ENCODE measurements at regions of chr19 and their contacts with region 1.

Region 1: DNA sequence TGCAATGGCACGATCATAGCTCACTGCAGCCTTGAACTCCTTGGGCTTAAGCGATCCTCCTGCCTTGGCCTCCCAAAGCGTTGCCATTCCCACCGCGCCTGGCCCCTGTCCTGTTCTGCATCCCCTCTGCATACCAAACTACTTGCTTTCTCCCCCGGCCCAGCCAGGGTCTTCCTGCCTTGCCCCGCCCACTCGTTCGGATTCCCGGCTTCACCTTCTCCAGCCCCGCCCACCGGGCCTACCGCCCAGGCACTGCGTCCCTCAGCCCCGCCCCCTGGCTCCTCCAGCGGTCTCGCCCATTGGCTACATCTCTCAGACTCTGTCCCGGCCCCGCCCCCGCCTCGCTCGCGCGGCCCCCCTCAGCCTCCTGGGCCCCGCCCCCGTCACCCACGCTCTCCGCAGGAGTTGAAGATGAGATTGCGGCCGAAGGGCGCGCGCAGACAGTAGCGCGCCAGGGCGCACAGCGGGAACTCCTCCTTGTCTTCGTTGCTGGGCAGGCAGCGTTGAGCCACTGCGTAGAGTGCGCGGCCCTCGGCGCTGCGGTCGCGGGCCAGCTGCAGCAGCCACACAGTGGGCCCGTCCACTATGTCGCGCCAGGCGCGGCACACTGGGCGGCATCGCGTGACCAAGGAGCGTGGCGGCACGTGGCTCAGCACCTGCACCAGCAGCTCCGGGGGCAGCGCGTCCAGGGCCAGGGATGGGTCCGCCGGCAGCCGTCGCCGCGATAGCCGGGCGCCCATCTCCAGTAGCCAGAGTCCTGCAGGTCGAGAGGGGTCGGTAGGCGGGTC is 19.0 kb downstream of the MRPS12 start:
- DNase-seq: peak; percentile 42 to 88 (median 80)
- ATAC-seq: peak; percentile 98
- H3K4me3 ChIP-seq: peak overlapping the region in 1 of 2 experiments; percentile 41
- H3K4me3 Mint-ChIP-seq: peak overlapping the region; percentile 64
- H3K27ac ChIP-seq: no peak overlapping the region
- H3K27ac Mint-ChIP-seq: peak overlapping the region; percentile 74
- H3K4me1 ChIP-seq: peaks cover 8% of the 10 kb centered on the region
- H3K4me1 Mint-ChIP-seq: peaks cover 14% of the 10 kb centered on the region
- H3K27me3 ChIP-seq: peaks cover 0 to 2% of the 10 kb centered on the region in 2 experiments
- H3K27me3 Mint-ChIP-seq: peaks cover 25% of the 10 kb centered on the region
- CTCF ChIP-seq: no peak

Region 2: DNA sequence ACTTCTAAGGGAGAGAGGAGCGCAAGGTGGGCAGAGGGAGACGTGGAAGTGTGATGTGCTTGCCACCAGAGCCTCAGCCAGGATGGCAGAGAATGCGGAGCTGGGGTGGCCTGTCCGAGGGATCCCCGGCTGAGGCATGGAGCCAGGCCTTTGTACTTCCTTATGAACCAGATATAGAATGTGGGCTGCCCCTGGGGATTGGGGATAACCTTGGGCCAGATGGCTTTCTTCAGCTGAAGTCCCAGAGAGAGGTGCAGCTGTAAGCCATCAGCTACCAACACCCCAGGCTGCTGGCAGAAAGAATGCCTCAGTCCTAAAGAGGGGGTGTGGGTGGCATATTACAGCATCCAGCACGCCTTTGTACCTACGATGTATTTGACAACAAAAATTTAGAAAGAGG is 51.3 kb after region 1 on chr19:
- CTCF ChIA-PET with region 1: no interaction called
- POLR2A ChIA-PET with region 1: no interaction called
- intact Hi-C with region 1: no loop called
- DNase-seq: no peak
- ATAC-seq: no peak
- H3K4me3 ChIP-seq: no peak overlapping the region
- H3K4me3 Mint-ChIP-seq: no peak overlapping the region
- H3K27ac ChIP-seq: no peak overlapping the region
- H3K27ac Mint-ChIP-seq: no peak overlapping the region
- H3K4me1 ChIP-seq: no peaks in the 10 kb centered on the region
- H3K4me1 Mint-ChIP-seq: no peaks in the 10 kb centered on the region
- H3K27me3 ChIP-seq: no peaks in the 10 kb centered on the region
- H3K27me3 Mint-ChIP-seq: peaks cover 18% of the 10 kb centered on the region
- CTCF ChIP-seq: no peak

Region 3: DNA sequence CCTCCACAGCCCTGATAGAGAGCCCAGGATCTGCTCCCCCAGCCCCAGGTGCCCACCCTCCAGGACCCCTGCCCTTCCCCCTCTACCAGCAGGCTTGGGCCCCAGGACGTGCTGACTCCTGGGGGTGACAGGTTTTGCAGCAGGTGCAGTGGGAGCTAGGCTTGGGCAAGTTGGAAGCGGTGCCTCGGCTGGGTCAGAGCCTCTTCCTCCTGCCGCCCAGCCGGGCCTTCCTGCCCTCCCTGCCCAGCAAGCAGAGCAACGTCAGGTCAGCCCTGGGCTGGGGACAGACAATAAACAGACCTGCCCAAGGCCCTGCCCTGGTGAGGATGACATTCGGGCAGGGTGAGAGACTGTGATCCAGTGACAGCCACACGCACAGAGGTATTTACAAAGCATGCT is 237.8 kb after region 1 on chr19:
- CTCF ChIA-PET with region 1: interaction called, 10 read pairs
- POLR2A ChIA-PET with region 1: no interaction called
- intact Hi-C with region 1: no loop called
- DNase-seq: no peak
- ATAC-seq: no peak
- H3K4me3 ChIP-seq: no peak overlapping the region
- H3K4me3 Mint-ChIP-seq: no peak overlapping the region
- H3K27ac ChIP-seq: no peak overlapping the region
- H3K27ac Mint-ChIP-seq: no peak overlapping the region
- H3K4me1 ChIP-seq: no peaks in the 10 kb centered on the region
- H3K4me1 Mint-ChIP-seq: no peaks in the 10 kb centered on the region
- H3K27me3 ChIP-seq: peaks cover 0 to 6% of the 10 kb centered on the region in 2 experiments
- H3K27me3 Mint-ChIP-seq: peaks cover 20% of the 10 kb centered on the region
- CTCF ChIP-seq: no peak

Region 4: DNA sequence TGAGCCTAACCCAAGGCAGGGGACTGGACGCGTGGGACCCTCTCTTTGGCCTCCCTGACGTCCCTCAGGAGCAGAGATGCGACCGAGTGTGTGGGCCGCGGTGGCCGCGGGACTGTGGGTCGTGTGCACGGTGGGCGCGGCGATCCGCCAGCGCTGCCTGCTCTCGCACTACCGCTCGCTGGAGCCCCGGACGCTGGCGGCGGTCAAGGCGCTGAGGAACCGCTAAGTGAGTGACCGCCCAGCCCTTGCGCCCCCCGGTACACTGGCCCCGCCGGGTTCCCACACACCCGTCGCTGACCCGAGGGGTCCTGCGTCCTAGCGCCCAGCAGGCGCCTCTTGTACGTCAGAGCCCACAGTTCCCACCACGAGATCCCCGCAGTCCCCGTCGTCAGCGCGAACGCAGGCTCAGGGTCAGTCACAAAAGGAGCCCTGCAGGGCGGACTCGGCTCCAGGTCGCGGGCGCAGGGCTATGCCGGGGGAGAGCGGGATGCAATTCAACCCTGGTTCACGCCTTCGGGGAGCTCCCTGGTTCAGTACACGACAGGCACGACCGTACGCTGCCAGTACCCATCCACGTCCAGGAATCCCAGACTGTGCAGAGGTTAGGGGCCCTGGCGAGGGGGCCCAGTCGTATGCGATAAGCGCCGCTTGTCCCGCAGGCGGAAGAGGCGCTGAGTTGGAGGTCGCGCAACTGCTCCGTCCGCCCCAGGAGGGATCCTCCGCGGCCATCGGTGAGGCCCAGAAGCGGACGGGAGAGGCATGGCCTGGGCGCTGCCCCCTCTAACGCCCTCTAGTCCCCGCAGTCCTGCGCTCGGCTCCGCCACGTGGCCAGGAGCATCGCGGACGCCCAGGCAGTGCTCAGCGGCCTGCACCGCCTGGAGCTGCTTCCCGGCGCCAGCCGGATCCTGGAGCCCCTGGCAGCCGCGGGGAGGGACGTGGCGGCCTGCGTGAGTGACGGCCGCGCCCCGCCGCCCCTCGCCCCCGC is 314.8 kb after region 1 on chr19:
- CTCF ChIA-PET with region 1: no interaction called
- POLR2A ChIA-PET with region 1: no interaction called
- intact Hi-C with region 1: no loop called
- DNase-seq: no peak
- ATAC-seq: no peak
- H3K4me3 ChIP-seq: no peak overlapping the region
- H3K4me3 Mint-ChIP-seq: no peak overlapping the region
- H3K27ac ChIP-seq: no peak overlapping the region
- H3K27ac Mint-ChIP-seq: no peak overlapping the region
- H3K4me1 ChIP-seq: peaks cover 8% of the 10 kb centered on the region
- H3K4me1 Mint-ChIP-seq: peaks cover 11% of the 10 kb centered on the region
- H3K27me3 ChIP-seq: peaks cover 24 to 40% of the 10 kb centered on the region in 2 experiments
- H3K27me3 Mint-ChIP-seq: peaks cover 35% of the 10 kb centered on the region
- CTCF ChIP-seq: no peak